GM12878 (cell line): ENCODE measurements at regions of chr6 and their contacts with region 1.

Region 1: DNA sequence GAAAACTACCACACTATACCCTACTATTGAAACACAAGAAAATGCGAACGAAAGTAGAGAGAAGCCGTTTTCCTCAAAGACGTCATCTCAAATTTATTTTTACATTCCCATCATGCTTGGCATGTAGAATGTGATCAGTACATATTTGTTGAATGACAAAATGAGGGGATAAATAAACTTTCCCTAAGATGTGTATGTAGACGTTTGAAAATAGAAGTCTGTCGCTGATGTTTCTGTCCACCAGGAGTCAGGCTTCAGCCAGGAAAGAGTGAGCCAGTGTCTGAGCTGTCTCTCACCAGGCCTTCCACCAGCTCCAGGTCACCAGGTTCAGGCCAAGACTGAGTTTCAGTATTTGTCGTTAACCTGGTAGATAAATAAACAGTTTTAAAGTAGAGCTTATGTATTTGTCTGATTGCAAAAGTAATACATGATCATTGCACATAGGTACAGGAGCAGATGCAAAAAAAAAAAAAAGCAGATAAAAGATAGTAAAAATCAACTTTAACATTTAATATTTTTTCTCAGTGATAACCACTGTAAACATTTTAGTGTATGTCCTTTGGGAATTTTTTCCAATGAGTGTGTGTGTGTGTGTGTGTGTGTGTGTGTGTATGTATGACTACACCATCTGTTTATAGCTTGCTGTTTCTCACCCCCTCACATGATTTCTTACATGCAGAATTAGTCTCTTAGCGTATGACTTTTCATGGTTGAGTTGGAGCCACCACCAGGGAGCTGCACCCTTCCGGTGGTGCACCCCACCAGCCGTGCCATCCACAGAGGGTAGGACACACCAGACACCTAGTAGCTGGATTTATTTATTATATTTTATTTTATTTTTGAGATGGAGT is 26.2 kb downstream of the WRNIP1 start:
- DNase-seq: peak; percentile 13
- ATAC-seq: peak; percentile 97
- H3K4me3 ChIP-seq: no peak overlapping the region
- H3K27ac ChIP-seq: no peak overlapping the region
- H3K4me1 ChIP-seq: peaks cover 7% of the 10 kb centered on the region
- H3K27me3 ChIP-seq: no peaks in the 10 kb centered on the region
- CTCF ChIP-seq: peak; percentile 64 to 81 (median 67)
- EP300 ChIP-seq: no peak
- POLR2A ChIP-seq: no peak
- RAD21 ChIP-seq: peak; percentile 73

Region 2: DNA sequence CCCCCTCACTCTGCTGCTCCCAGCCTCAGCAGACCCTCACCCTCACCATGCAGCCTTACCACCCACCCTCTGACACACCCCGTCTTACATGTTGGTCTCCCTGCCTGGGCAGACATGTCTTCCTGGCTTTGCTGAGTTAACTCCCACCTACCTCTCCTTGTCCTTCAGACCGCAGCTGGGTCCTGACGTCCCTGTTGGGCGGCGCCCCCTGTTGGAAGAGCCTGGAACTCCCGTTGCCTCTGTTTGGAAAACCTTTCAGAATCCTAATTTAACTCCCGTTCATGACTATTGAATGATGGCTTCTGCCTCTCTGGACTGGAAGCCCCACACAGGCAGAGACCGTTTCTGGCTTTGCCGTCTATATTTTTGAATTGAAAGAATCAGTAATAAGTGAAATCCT is 285.7 kb before region 1 on chr6:
- CTCF ChIA-PET with region 1: no interaction called
- POLR2A ChIA-PET with region 1: no interaction called
- RAD21 ChIA-PET with region 1: no interaction called
- SMC1A ChIA-PET with region 1: no interaction called
- in situ Hi-C with region 1: no loop called
- intact Hi-C with region 1: no loop called
- DNase-seq: no peak
- ATAC-seq: no peak
- H3K4me3 ChIP-seq: no peak overlapping the region
- H3K27ac ChIP-seq: no peak overlapping the region
- H3K4me1 ChIP-seq: no peaks in the 10 kb centered on the region
- H3K27me3 ChIP-seq: peaks cover 0 to 1% of the 10 kb centered on the region in 2 experiments; a peak in 2 of 4 replicates
- CTCF ChIP-seq: peak in 2 of 3 experiments; percentile 32 to 34; a peak in 3 of 6 replicates
- EP300 ChIP-seq: no peak
- POLR2A ChIP-seq: no peak
- RAD21 ChIP-seq: no peak

Region 3: GRCh38 chr6:2695454-2696095 is 95.8 kb before region 1 on chr6:
- CTCF ChIA-PET with region 1: no interaction called
- POLR2A ChIA-PET with region 1: no interaction called
- RAD21 ChIA-PET with region 1: no interaction called
- SMC1A ChIA-PET with region 1: no interaction called
- in situ Hi-C with region 1: no loop called
- intact Hi-C with region 1: no loop called
- DNase-seq: no peak
- ATAC-seq: no peak
- H3K4me3 ChIP-seq: no peak overlapping the region
- H3K27ac ChIP-seq: no peak overlapping the region
- H3K4me1 ChIP-seq: no peaks in the 10 kb centered on the region
- H3K27me3 ChIP-seq: peaks cover 0 to 3% of the 10 kb centered on the region in 2 experiments; a peak in 2 of 4 replicates
- CTCF ChIP-seq: peak in 2 of 3 experiments; percentile 30 to 52; a peak in 4 of 6 replicates
- EP300 ChIP-seq: no peak
- POLR2A ChIP-seq: no peak
- RAD21 ChIP-seq: peak; percentile 63

Region 4: DNA sequence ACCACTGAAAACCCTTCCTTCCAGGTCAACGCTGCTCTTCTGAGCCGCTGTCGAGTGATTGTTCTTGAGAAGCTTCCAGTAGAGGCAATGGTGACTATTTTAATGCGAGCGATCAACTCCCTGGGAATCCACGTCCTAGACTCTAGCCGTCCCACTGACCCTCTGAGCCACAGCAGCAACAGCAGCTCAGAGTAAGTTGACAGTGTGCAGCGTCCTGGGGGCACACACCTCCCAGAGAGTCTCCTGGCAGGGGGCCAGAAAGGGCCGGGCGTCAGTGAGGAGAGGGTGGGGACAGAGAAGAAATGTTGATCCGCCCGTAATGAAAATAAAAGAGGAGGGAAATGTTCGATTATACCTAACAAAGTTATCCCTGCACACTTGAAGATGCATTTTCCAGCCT is 21.2 kb before region 1 on chr6:
- CTCF ChIA-PET with region 1: interaction called, 13 read pairs
- POLR2A ChIA-PET with region 1: interaction called, 3 read pairs
- RAD21 ChIA-PET with region 1: interaction called, 4 read pairs
- SMC1A ChIA-PET with region 1: interaction called, 15 read pairs
- in situ Hi-C with region 1: no loop called
- intact Hi-C with region 1: no loop called
- DNase-seq: no peak
- ATAC-seq: no peak
- H3K4me3 ChIP-seq: no peak overlapping the region
- H3K27ac ChIP-seq: no peak overlapping the region
- H3K4me1 ChIP-seq: peaks cover 11% of the 10 kb centered on the region
- H3K27me3 ChIP-seq: no peaks in the 10 kb centered on the region
- CTCF ChIP-seq: no peak
- EP300 ChIP-seq: no peak
- POLR2A ChIP-seq: no peak
- RAD21 ChIP-seq: no peak

Region 5: GRCh38 chr6:2911171-2911570 is 119.8 kb after region 1 on chr6:
- CTCF ChIA-PET with region 1: interaction called, 28 read pairs
- POLR2A ChIA-PET with region 1: interaction called, 3 read pairs
- RAD21 ChIA-PET with region 1: interaction called, 28 read pairs
- SMC1A ChIA-PET with region 1: interaction called, 24 read pairs
- in situ Hi-C with region 1: no loop called
- intact Hi-C with region 1: loop called (anchors 5 kb)
- DNase-seq: no peak
- ATAC-seq: peak; percentile 84
- H3K4me3 ChIP-seq: no peak overlapping the region
- H3K27ac ChIP-seq: no peak overlapping the region
- H3K4me1 ChIP-seq: peaks cover 13% of the 10 kb centered on the region
- H3K27me3 ChIP-seq: no peaks in the 10 kb centered on the region; a peak in 1 of 4 replicates
- CTCF ChIP-seq: no peak
- EP300 ChIP-seq: no peak
- POLR2A ChIP-seq: no peak
- RAD21 ChIP-seq: no peak

Region 6: DNA sequence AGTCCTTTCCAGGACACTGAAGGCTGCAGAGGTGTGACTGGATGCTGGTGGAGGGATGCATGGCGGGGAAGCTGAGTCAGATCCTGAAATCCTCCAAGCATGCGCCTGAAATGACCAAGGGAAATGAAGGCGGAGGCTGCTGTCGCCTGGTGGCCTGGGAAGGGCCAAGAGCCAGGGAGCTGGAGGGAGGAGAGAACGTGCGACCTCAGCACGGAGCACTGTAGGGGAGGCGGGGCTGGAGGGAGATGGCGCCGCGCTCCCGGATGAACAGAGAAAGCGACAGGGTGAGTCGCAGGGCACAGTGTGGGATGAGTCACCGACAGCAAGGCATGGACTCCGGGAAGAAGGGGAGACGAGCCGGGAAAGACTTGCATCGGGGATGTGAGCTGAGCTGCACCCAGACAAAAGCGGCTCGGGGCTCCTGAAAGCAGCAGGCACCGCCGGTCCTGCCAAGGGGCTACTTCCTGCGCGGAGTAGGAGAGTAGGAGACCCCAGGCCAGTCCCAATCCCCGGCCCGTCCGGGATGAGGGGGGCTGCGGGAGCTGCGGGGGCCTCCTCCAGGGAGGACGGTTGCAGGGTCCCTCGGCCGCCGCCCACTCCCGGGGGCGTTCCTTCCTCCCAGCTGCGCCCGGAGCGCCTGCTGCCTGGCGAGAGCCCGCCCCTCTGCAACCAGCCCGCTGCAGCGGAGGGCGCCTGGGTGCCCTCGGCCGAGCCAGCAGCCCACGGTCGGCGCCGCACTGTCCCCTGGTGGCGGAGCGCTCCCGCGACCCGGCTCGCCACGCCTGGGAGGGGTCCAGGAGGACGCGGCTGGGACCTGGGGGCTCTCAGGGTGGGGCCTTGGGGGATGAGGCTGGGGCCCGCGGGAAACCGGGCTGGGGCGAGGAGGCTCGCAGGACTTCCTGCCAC is 197.3 kb after region 1 on chr6:
- CTCF ChIA-PET with region 1: interaction called, 23 read pairs
- POLR2A ChIA-PET with region 1: no interaction called
- RAD21 ChIA-PET with region 1: interaction called, 46 read pairs
- SMC1A ChIA-PET with region 1: interaction called, 19 read pairs
- in situ Hi-C with region 1: no loop called
- intact Hi-C with region 1: loop called (anchors 2 kb)
- DNase-seq: no peak
- ATAC-seq: peak; percentile 92
- H3K4me3 ChIP-seq: peak overlapping the region; percentile 71
- H3K27ac ChIP-seq: peak overlapping the region; percentile 79
- H3K4me1 ChIP-seq: peaks cover 13% of the 10 kb centered on the region
- H3K27me3 ChIP-seq: peaks cover 0 to 2% of the 10 kb centered on the region in 2 experiments; a peak in 3 of 4 replicates
- CTCF ChIP-seq: peak; percentile 56 to 75 (median 73)
- EP300 ChIP-seq: no peak; a peak in 1 of 4 replicates
- POLR2A ChIP-seq: peak; percentile 64
- RAD21 ChIP-seq: peak; percentile 73

Region 7: DNA sequence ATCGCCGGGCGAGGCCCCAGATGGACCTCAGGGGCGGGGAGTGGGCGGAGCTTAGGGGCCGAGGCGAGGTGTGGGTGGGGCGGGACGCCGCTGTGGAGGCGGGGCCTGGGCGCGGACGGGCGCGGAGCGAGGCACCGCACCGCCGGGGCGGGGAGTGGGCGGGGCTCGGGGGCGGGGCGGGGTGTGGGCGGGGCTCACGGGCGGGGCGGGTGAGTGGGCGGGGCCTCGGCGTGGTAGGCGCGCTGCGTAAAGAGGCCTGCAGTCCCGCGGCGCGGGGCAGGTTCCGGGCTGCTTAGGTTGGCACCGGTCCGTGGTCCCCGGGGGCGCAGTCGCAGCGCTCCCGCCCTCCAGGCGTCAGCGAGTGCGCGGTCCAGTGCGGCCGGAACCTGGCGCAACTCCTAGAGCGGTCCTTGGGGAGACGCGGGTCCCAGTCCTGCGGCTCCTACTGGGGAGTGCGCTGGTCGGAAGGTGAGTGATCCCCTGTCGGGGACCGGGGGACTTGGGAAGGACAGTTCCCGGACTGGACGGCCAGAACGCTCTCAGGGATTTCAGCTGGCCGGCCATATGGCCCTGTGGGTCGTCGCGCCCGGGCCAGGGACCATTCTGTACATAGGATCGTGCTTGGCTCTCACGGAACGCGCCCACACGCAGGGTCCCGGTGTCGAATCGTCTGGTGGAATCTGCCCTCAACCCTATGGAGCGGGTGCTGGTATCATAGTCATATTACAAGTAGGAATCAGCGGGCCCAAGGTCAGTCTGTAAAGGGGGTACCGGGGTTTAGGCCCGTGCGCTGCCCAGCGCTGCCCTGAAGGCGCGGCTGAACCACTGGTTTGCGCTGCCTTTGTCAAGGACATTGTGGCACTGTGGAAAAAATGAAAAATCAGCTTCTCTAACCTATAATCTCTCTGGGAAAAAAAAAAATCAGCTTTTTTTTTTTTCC is 208.5 kb after region 1 on chr6 and contains the start of gene NQO2:
- CTCF ChIA-PET with region 1: interaction called, 10 read pairs
- POLR2A ChIA-PET with region 1: no interaction called
- RAD21 ChIA-PET with region 1: interaction called, 4 read pairs
- SMC1A ChIA-PET with region 1: interaction called, 5 read pairs
- in situ Hi-C with region 1: no loop called
- intact Hi-C with region 1: no loop called
- DNase-seq: peak; percentile 13
- ATAC-seq: peak; percentile 92
- H3K4me3 ChIP-seq: peak within 1 kb of the TSS; percentile 87
- H3K27ac ChIP-seq: no peak within 1 kb of the TSS; the same call in 1 of the 2 replicates
- H3K4me1 ChIP-seq: peaks cover 12% of the 10 kb centered on the region
- H3K27me3 ChIP-seq: no peaks in the 10 kb centered on the region
- CTCF ChIP-seq: no peak
- EP300 ChIP-seq: no peak
- POLR2A ChIP-seq: peak; percentile 87
- RAD21 ChIP-seq: no peak
- polyA plus RNA-seq, gene NQO2: 0.55 to 0.66 TPM